Mammary epithelial cell (primary cell): ENCODE measurements at regions of chr14 and their contacts with region 1.

Region 1: DNA sequence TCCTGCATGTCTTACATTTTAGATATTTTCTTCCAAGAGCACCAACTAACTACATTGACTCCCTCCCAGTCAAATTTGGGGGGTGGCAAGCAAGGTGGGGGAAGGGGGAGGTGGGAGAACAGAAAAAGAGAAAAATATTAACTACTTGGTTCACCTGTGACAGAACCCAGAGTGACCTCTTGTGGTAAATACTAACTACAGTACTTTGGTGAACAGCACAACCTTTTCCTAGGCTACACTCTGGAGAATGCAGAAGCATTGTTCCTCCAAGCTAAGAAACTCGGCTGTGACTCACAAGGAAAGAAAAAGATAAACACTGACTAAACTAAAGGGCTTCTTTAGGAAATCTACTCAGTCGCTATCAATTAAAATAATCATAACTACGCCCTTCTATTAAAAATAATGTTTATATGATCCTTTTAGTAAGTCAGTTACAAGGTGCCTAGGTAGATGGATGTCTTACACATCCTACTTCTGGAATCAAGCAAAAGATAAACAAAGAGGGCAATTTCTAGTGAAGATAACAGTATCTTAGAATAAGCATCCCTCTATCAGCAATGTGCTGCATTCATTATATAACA is 5.4 kb downstream of the KCNH5 start:
- DNase-seq: peak; percentile 74
- H3K4me3 ChIP-seq: no peak overlapping the region
- H3K27ac ChIP-seq: no peak overlapping the region
- H3K4me1 ChIP-seq: no peaks in the 10 kb centered on the region
- H3K27me3 ChIP-seq: no peaks in the 10 kb centered on the region
- CTCF ChIP-seq: peak; percentile 40 to 65

Region 2: GRCh38 chr14:62592877-62593276 is 447.0 kb before region 1 on chr14:
- CTCF ChIA-PET with region 1: no interaction called
- dilution Hi-C with region 1: no loop called
- in situ Hi-C with region 1: no loop called
- intact Hi-C with region 1: no loop called
- DNase-seq: peak; percentile 62
- H3K4me3 ChIP-seq: no peak overlapping the region
- H3K27ac ChIP-seq: no peak overlapping the region
- H3K4me1 ChIP-seq: no peaks in the 10 kb centered on the region
- H3K27me3 ChIP-seq: peaks cover 2% of the 10 kb centered on the region
- CTCF ChIP-seq: no peak

Region 3: DNA sequence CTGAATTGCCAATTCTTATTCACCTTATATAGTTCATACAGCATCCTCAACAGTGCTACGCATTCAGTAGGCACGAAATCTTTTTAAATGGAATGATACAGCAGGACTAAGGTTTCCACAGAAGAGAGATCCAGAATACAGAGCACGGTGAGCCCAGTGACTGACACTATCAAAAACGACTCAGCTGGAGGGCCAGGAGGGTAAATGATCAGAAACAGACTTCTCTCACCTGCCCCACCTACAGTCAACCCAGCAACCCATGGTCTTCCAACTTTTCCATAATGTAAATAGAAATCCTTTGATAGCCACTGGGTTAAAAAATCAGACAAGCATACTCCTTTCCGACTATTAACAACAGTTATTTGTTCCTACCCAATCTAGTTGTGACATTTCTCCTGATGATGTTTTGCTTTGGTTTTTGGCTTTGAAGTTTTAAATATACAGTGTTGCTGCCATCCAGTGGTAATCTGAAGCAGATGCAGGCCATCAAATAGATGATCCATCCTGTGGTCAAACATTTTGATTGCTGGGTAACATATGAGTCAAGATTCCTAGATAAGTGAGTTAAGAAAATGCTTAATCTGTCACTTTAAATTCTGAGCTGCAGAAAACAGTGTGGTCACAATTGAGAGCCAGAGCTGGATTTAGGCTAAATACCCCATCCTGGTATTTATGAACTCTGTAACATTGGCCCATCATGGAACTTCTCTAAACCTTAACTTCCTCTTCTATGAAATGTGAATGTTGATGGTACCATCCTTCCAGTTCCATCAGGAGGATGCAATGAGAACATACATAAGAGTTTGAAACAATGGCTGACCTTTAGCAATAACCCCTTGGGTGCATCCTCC is 236.8 kb after region 1 on chr14:
- CTCF ChIA-PET with region 1: no interaction called
- dilution Hi-C with region 1: no loop called
- in situ Hi-C with region 1: no loop called
- intact Hi-C with region 1: loop called (anchors 2 kb)
- DNase-seq: peak; percentile 65
- H3K4me3 ChIP-seq: no peak overlapping the region
- H3K27ac ChIP-seq: no peak overlapping the region
- H3K4me1 ChIP-seq: no peaks in the 10 kb centered on the region
- H3K27me3 ChIP-seq: no peaks in the 10 kb centered on the region
- CTCF ChIP-seq: peak; percentile 75 to 86